Activated CD4-positive, alpha-beta memory T cell treated with anti-CD3 and anti-CD28 coated beads, Interleukin-2, amount 10 ng/mL, durations not matched to agents 7 days and 5 days (primary cell): ENCODE measurements at regions of chr2 and their contacts with region 1.

Region 1: DNA sequence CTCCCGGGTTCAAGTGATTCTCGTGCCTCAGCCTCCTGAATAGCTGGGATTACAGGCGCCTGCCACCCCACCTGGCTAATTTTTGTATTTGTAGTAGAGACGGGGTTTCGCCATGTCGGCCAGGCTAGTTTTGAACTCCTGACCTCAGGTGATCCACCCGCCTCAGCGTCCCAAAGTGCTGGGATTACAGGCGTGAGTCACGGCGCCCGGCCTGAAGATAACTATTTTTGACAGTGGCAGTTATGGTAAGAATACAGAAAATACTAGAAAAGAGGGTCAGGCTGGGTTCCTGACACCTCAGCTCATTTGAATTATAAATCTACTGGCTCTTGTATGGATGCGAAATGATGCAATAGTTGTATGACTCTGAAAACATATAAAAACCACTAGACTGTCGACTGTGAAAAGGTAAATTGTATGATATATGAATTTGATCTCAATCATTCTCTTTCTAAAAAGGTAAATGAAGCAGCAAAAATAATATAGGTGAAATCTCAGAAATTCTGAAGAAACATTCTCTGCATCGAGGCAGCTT is 11.1 kb upstream of the DGKD start:
- DNase-seq: no peak
- H3K4me3 Mint-ChIP-seq: no peak overlapping the region
- H3K27ac Mint-ChIP-seq: no peak overlapping the region
- H3K4me1 Mint-ChIP-seq: peaks cover 8% of the 10 kb centered on the region
- H3K27me3 Mint-ChIP-seq: peaks cover 22% of the 10 kb centered on the region

Region 2: DNA sequence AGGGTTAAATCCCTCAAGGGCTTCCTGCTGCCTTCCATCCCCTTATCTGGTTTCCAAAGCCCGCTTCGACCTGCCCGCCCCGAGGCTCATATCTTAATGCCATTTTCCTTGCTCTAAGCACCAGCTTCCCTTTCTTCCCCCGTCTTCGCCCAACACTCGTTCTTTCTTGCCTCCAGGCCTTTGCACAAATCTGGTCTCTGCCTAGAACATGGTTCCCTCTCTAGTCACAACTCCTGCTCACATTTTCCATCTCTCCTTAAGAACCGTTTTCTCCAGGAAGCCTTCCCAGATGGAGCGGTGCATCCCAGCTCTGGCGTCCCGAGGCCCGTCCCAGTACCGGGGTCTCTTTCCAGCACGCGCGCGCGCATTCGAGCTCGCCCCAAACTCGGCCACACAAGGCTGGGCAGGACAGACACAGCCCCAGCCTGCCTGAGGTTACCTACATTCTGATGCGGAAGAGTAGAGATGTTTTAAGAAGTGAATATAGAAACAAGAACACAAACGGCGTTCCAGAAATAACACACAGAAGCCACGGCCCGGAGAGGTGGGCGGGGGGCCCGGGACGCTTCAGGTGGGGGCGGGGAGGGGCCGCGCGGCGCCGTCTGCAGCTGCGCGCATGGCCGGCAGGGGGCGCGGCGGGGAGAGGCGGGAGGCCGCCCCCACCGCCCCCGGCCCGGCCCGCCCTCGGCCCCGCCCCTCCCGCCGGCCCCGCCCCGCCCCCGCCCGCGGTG is 10.7 kb after region 1 on chr2 and contains the start of gene DGKD:
- CTCF ChIA-PET with region 1: interaction called, 21 read pairs
- POLR2A ChIA-PET with region 1: interaction called, 3 read pairs
- DNase-seq: peak; percentile 77
- H3K4me3 Mint-ChIP-seq: peak within 1 kb of the TSS; percentile 86
- H3K27ac Mint-ChIP-seq: peak within 1 kb of the TSS; percentile 84
- H3K4me1 Mint-ChIP-seq: peaks cover 75% of the 10 kb centered on the region
- H3K27me3 Mint-ChIP-seq: no peaks in the 10 kb centered on the region
- total RNA-seq, gene DGKD: 77.8 to 78.3 TPM